ENCODE measurements at regions of chr2 and their contacts with region 1.

Region 1: DNA sequence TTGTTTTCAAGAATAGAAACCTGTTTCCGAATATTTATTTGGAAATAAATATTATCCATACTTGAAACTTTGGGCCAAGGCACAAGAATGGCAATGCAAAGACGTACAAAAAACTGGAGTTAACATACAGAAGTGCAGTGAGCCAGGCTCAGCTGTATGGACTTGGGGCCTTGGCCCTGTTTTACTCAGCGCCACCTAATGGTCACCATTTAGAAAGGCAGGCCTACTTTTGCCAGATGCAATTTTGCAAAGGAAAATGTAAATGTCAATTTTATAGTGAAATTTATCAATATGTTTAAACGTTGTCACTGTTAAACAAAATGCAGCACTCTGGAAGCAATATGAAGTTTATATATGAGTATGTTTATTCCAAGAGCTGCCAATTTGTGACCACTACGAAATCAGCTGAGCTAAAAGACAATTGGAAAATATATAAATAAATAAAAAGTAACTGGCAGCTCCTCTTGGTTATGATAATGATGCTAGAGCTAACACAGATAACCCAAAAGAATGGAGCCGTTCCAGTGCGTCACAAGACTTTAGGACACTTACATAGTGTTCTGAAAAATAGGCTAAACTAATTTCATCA is 155.0 kb downstream of the ARHGAP15 start:
- H3K4me3 ChIP-seq: no peak overlapping the region
- H3K27ac ChIP-seq: no peak overlapping the region
- H3K4me1 ChIP-seq: no peaks in the 10 kb centered on the region
- CTCF ChIP-seq: peak; percentile 29; the same call in 1 of the 2 replicates

Region 2: GRCh38 chr2:143183804-143184463 is 100.2 kb before region 1 on chr2:
- CTCF ChIA-PET with region 1: no interaction called
- POLR2A ChIA-PET with region 1: no interaction called
- H3K4me3 ChIP-seq: no peak overlapping the region
- H3K27ac ChIP-seq: no peak overlapping the region
- H3K4me1 ChIP-seq: no peaks in the 10 kb centered on the region
- CTCF ChIP-seq: no peak

Region 3: DNA sequence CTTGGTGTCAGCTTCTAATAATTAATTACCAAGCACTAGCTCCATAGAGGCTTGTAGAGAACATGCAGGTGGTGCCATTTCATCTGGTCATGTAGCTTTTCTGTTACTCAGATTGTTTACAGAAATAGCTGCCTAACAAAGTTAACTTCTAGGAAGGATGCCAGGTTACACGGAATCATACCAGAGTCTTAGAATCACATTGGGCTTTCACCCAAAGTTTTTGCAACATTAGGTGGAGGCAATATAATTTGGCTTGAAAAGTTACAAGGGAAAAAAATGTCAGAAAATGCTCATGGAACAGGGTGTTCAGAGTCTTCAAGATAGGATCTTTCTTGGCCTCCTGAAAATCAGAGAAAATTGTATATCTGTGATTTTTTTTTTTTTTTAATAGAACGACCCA is 19.3 kb before region 1 on chr2:
- CTCF ChIA-PET with region 1: interaction called, 13 read pairs
- POLR2A ChIA-PET with region 1: no interaction called
- H3K4me3 ChIP-seq: no peak overlapping the region
- H3K27ac ChIP-seq: no peak overlapping the region
- H3K4me1 ChIP-seq: no peaks in the 10 kb centered on the region
- CTCF ChIP-seq: no peak